ENCODE measurements at regions of chr4 and their contacts with region 1.

Region 1: GRCh38 chr4:2977211-2978088 is 14.1 kb downstream of the GRK4 start:
- DNase-seq: no peak
- CTCF ChIP-seq: no peak

Region 2: DNA sequence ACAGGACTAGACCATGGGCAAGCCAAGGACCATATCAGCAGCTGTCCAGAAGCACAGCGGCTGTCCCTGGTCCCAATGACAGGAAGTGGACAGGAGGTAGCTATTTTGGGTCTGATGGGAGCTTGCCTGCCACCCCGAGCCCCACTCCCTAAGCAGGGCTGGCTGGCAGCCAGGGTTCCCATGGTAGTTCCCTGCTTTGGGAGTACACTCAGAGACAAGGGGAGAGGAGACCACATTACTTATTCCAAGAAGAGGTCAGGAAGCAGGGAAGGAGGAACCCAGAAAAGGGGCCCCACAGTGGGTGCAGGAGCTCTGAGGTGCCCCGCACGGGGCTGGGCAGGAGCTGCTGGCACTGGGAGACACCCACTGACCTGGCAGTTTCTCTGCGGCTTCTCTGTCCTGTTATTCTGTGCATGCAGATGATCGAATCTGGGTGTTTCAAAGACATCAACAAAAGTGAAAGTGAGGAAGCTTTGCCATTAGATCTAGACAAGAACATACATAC is 60.6 kb after region 1 on chr4:
- in situ Hi-C with region 1: loop called (anchors 10 kb)
- DNase-seq: no peak
- CTCF ChIP-seq: no peak

Measured in GM13976 (cell line).